CD4-positive, alpha-beta memory T cell (primary cell): ENCODE measurements at regions of chr10 and their contacts with region 1.

Region 1: GRCh38 chr10:31318854-31319601 is at the start of gene ZEB1:
- DNase-seq: peak; percentile 91 to 97 (median 92)
- H3K4me3 ChIP-seq: peak within 1 kb of the TSS; percentile 55 to 74
- H3K4me3 Mint-ChIP-seq: peak within 1 kb of the TSS; percentile 97 to 100 (median 99)
- H3K27ac ChIP-seq: peak within 1 kb of the TSS; percentile 88
- H3K27ac Mint-ChIP-seq: peak within 1 kb of the TSS; percentile 94 to 100 (median 99)
- H3K4me1 ChIP-seq: peaks cover 30% of the 10 kb centered on the region
- H3K4me1 Mint-ChIP-seq: peaks cover 24 to 53% (median 38%) of the 10 kb centered on the region in 4 donors
- H3K27me3 ChIP-seq: no peaks in the 10 kb centered on the region
- H3K27me3 Mint-ChIP-seq: no peaks in the 10 kb centered on the region
- total RNA-seq, gene ZEB1: 68.7 to 70.6 TPM

Region 2: DNA sequence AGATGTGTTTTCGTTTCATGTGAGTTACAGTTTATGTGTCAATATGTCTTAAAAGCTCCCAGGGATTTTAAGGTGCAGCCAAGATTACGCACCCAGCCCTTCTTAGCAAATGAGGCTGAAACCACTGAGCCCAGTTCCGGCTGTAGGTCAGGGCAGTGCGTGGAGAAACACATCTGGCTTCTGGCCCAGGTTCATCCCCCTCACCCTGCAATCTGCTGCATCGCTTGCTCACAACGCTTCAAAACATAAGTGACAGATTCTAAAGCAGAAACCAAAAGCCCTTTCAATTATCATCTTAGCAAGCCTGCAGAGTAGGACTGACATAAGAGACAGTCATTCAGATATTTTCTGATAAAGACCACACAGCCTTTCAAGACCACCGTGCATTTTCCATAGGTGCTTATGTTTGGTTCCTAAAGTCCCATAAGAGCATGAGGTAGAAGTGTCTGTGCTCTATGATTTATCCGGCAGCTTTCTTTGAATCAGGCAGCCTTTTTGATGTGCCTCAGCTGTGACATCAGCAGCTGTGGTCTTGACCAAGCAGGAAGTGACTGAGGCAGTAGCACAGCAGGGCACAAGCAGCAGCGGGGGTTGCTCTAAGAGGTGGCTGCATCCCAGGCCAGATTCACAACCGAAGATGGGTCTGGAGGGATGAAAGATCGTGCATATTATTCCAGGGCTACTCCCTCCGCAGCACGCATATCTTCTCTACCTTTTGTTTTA is 617.4 kb before region 1 on chr10:
- CTCF ChIA-PET with region 1: no interaction called
- POLR2A ChIA-PET with region 1: interaction called, 4 read pairs
- intact Hi-C with region 1: loop called (anchors 5 kb)
- DNase-seq: peak; percentile 75 to 88 (median 78)
- H3K4me3 ChIP-seq: peak overlapping the region in 1 of 2 donors; percentile 28
- H3K4me3 Mint-ChIP-seq: peak overlapping the region; percentile 78 to 88 (median 84)
- H3K27ac ChIP-seq: peak overlapping the region; percentile 59
- H3K27ac Mint-ChIP-seq: peak overlapping the region; percentile 90 to 98 (median 95)
- H3K4me1 ChIP-seq: peaks cover 89% of the 10 kb centered on the region
- H3K4me1 Mint-ChIP-seq: peaks cover 53 to 90% (median 77%) of the 10 kb centered on the region in 4 donors
- H3K27me3 ChIP-seq: no peaks in the 10 kb centered on the region
- H3K27me3 Mint-ChIP-seq: no peaks in the 10 kb centered on the region

Region 3: GRCh38 chr10:31133628-31134302 is 185.3 kb before region 1 on chr10:
- CTCF ChIA-PET with region 1: interaction called, 3 read pairs
- POLR2A ChIA-PET with region 1: interaction called, 6 read pairs
- intact Hi-C with region 1: loop called (anchors 5 kb)
- DNase-seq: peak; percentile 37 to 60 (median 47)
- H3K4me3 ChIP-seq: peak overlapping the region in 1 of 2 donors; percentile 59
- H3K4me3 Mint-ChIP-seq: peak overlapping the region; percentile 61 to 85 (median 79)
- H3K27ac ChIP-seq: peak overlapping the region; percentile 45
- H3K27ac Mint-ChIP-seq: peak overlapping the region in 6 of 7 donors; percentile 17 to 72 (median 44)
- H3K4me1 ChIP-seq: peaks cover 37% of the 10 kb centered on the region
- H3K4me1 Mint-ChIP-seq: peaks cover 23 to 51% (median 35%) of the 10 kb centered on the region in 4 donors
- H3K27me3 ChIP-seq: no peaks in the 10 kb centered on the region
- H3K27me3 Mint-ChIP-seq: no peaks in the 10 kb centered on the region

Region 4: DNA sequence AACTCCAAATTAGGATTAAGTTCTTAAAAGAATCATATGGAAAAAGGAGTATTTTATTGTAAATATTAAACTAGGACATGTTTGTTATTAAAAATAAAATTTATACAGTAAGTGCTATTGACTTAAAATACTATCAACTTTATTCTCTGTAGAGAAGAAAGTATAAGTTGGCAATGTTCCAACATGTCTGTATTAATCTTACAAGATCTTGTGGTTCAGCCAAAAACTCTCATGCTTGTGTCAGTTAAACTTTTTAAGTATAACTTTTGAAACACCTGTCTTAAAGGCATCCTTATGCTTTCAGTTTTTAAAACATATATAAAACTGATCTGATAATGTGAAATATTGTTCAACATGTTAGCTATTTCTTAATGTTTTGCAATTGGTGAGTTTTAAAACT is 160.7 kb after region 1 on chr10:
- CTCF ChIA-PET with region 1: no interaction called
- POLR2A ChIA-PET with region 1: no interaction called
- intact Hi-C with region 1: no loop called
- DNase-seq: peak in 4 of 5 donors; percentile 5 to 18 (median 14)
- H3K4me3 ChIP-seq: no peak overlapping the region
- H3K4me3 Mint-ChIP-seq: no peak overlapping the region
- H3K27ac ChIP-seq: no peak overlapping the region
- H3K27ac Mint-ChIP-seq: no peak overlapping the region
- H3K4me1 ChIP-seq: peaks cover 9% of the 10 kb centered on the region
- H3K4me1 Mint-ChIP-seq: peaks cover 22 to 43% (median 27%) of the 10 kb centered on the region in 4 donors
- H3K27me3 ChIP-seq: no peaks in the 10 kb centered on the region
- H3K27me3 Mint-ChIP-seq: no peaks in the 10 kb centered on the region

Region 5: GRCh38 chr10:31759799-31760626 is 441.0 kb after region 1 on chr10:
- CTCF ChIA-PET with region 1: no interaction called
- POLR2A ChIA-PET with region 1: interaction called, 4 read pairs
- intact Hi-C with region 1: loop called (anchors 1 kb)
- DNase-seq: peak; percentile 92 to 99 (median 97)
- H3K4me3 ChIP-seq: peak overlapping the region; percentile 66 to 90
- H3K4me3 Mint-ChIP-seq: peak overlapping the region; percentile 75 to 92 (median 86)
- H3K27ac ChIP-seq: peak overlapping the region; percentile 78
- H3K27ac Mint-ChIP-seq: peak overlapping the region; percentile 94 to 99 (median 99)
- H3K4me1 ChIP-seq: peaks cover 10% of the 10 kb centered on the region
- H3K4me1 Mint-ChIP-seq: peaks cover 9 to 17% (median 13%) of the 10 kb centered on the region in 4 donors
- H3K27me3 ChIP-seq: no peaks in the 10 kb centered on the region
- H3K27me3 Mint-ChIP-seq: no peaks in the 10 kb centered on the region

Region 6: DNA sequence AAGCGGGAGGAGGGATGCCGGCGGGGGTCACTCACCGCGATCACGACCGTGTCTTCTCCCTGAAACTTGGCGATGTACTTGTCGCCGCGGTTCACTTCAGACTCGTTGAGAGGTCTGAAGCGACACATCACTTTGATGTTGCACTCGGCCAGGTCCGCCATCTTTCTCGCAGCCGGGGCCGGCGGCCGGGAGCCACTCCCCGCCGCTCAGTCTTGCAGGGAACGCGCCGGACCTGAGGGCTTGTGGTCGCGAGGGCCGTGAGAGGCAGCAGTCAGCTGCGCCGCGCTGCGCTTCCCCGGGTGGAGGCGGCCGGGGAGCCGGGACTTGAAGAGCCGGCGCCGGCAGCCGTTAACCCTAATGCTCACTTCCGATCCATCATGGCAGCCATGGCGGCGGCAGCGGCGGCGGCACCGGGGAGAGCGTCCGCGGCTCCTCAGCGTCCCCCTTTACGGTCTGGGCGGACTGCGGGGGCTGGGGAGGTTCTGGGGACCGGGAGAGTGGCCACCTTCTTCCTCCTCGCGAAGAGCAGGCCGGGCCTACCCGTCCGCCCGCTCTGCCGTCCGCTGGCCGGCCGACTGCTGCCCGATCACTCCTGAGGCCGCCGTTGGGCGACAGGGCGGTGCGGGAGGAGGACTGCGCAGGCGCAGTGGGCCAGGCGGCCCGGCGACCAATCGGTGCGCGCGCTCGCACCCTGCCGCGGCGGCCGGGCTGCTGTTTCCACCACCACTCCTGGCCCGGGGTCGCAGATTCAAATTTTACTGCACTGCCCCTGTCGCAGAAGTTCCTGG is 737.0 kb after region 1 on chr10 and contains the start of gene KIF5B:
- CTCF ChIA-PET with region 1: no interaction called
- POLR2A ChIA-PET with region 1: no interaction called
- intact Hi-C with region 1: loop called (anchors 10 kb)
- DNase-seq: peak; percentile 81 to 92 (median 88)
- H3K4me3 ChIP-seq: peak within 1 kb of the TSS; percentile 88 to 93
- H3K4me3 Mint-ChIP-seq: peak within 1 kb of the TSS; percentile 95 to 99 (median 98)
- H3K27ac ChIP-seq: peak within 1 kb of the TSS; percentile 81
- H3K27ac Mint-ChIP-seq: peak within 1 kb of the TSS; percentile 94 to 97 (median 95)
- H3K4me1 ChIP-seq: peaks cover 49% of the 10 kb centered on the region
- H3K4me1 Mint-ChIP-seq: peaks cover 30 to 54% (median 44%) of the 10 kb centered on the region in 4 donors
- H3K27me3 ChIP-seq: no peaks in the 10 kb centered on the region
- H3K27me3 Mint-ChIP-seq: no peaks in the 10 kb centered on the region
- total RNA-seq, gene KIF5B: 54.8 to 55.6 TPM